CD4-positive, alpha-beta T cell (primary cell): ENCODE measurements at regions of chr20 and their contacts with region 1.

Region 1: DNA sequence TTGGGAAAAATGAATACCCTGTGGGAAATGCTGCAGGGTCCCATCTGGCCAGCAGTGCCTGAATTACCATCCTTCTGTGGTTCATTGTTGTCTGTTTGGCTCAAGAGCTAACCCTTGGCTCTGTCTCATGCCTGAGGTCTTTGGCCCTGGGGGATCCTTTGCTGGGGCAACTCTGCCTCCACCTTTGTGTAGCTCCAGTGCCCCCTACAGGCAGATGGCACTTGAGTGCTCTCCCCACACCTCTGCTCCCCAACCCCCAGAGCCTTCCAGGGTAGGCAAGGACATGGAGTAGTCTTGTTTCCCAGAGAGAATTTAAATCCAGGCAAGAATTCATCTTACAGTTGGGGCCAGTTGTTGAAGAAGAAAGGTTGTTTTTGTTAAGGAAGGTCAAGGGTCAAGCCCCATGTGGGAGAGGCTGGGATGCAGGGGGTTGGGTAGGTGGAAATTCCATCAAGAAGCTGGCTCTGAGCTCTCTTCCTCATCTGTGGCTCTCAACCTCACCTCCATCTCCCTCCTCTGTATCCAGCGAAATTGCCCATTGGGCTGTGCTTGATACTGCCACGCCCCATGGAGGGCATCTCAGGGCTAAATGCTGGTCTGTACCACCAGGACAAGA is 44.2 kb downstream of the ZNF831 start:
- DNase-seq: peak; percentile 73 to 90 (median 81)
- ATAC-seq: peak; percentile 96
- H3K4me3 ChIP-seq: no peak overlapping the region
- H3K4me3 Mint-ChIP-seq: no peak overlapping the region
- H3K27ac ChIP-seq: no peak overlapping the region
- H3K27ac Mint-ChIP-seq: peak overlapping the region; percentile 77
- H3K4me1 ChIP-seq: peaks cover 27% of the 10 kb centered on the region
- H3K4me1 Mint-ChIP-seq: peaks cover 51% of the 10 kb centered on the region
- H3K27me3 ChIP-seq: no peaks in the 10 kb centered on the region
- H3K27me3 Mint-ChIP-seq: no peaks in the 10 kb centered on the region
- CTCF ChIP-seq: peak; percentile 78

Region 2: GRCh38 chr20:58870239-58871014 is 337.4 kb before region 1 on chr20:
- CTCF ChIA-PET with region 1: interaction called, 3 read pairs
- POLR2A ChIA-PET with region 1: no interaction called
- intact Hi-C with region 1: loop called (anchors 1 to 5 kb)
- DNase-seq: peak in 12 of 14 experiments; percentile 38 to 75 (median 50)
- ATAC-seq: peak; percentile 67
- H3K4me3 ChIP-seq: no peak overlapping the region
- H3K4me3 Mint-ChIP-seq: no peak overlapping the region
- H3K27ac ChIP-seq: no peak overlapping the region
- H3K27ac Mint-ChIP-seq: no peak overlapping the region
- H3K4me1 ChIP-seq: peaks cover 3% of the 10 kb centered on the region
- H3K4me1 Mint-ChIP-seq: peaks cover 5% of the 10 kb centered on the region
- H3K27me3 ChIP-seq: no peaks in the 10 kb centered on the region
- H3K27me3 Mint-ChIP-seq: no peaks in the 10 kb centered on the region
- CTCF ChIP-seq: peak; percentile 86

Region 3: DNA sequence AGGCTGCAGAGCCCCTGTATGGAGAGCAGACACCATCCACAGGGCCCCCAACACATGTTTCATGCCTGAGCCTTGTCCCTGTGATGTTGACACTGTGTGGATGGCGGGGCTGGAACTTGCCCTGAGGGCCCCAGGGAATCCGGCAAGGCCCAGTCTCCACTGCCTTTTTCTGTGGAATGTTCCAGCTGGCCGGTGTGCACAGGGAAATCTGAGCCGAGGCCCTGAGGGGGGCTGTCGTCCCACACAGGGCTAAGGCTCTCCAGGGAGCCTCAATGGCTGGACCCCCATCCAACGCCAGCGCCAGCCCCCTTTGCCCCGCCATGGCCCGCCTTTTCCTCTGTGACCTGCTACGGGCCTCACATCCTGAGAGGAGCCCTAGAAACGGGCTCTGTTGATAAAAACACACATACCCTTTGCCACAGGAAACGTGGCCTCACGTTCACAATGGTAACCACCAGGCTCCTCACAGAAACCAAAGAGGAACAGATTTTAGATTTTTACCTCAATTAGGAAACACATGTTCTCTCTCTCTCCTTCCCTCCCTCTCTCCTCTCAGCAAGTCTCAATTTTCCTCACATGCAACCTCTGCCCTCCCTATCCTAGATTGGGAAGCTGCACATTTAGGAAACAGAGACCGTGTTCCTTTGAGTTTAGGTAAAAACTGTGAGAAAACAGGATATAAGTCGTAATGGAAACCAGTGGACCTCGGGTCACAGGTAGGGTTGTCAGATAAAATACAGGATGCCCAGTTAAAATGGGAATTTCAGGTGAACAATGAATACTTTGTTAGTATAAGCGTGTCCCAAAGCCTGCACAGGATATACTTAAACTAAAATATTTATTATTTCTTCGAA is 58.0 kb before region 1 on chr20:
- CTCF ChIA-PET with region 1: interaction called, 11 read pairs
- POLR2A ChIA-PET with region 1: interaction called, 13 read pairs
- intact Hi-C with region 1: loop called (anchors 5 kb)
- DNase-seq: peak; percentile 52 to 94 (median 72)
- ATAC-seq: peak; percentile 79
- H3K4me3 ChIP-seq: peak overlapping the region; percentile 21
- H3K4me3 Mint-ChIP-seq: peak overlapping the region; percentile 82
- H3K27ac ChIP-seq: peak overlapping the region; percentile 95 to 96
- H3K27ac Mint-ChIP-seq: peak overlapping the region; percentile 97
- H3K4me1 ChIP-seq: peaks cover 99% of the 10 kb centered on the region
- H3K4me1 Mint-ChIP-seq: peaks cover 95% of the 10 kb centered on the region
- H3K27me3 ChIP-seq: no peaks in the 10 kb centered on the region
- H3K27me3 Mint-ChIP-seq: no peaks in the 10 kb centered on the region
- CTCF ChIP-seq: no peak

Region 4: DNA sequence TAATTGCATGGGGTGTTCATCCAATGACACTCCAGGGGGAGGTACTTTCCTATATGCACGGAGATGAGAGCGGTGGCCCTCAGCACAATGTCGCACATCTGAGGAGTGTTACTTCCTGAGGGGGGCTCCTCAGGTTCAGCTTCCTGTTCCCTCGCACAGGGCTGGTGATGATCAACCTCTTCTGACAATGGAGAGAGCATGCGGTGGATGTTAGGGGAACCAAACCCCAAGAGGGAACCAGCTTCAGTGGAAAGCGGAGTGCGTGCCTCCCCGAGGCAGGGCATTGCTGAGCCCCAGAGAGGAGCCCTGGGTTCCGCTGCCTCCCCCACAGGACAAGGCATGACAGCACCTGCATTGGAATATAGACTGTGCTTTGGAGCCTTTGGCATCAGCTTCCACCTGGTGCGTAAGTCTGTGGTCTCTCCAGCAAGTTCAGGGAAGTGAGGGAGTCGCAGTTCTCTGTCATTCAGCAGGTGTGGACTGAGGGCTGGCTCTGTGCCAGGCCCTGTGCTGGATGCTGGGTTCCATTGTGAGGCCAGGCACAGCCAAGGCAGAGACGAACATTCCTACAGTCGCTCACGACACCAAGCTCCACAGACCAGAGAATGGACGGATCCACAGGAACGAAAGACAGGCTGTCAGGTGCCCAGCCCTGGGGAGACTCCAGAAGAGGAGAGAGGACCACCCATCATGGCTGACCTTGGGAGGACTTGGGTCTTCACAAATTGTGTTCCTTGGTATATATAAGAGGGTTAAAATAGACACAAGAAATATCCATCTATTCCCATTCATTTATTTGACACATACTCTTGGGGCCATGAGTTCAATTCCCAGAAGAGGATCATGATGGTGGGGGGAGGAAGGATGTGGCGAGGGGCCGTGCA is 48.1 kb before region 1 on chr20:
- CTCF ChIA-PET with region 1: interaction called, 7 read pairs
- POLR2A ChIA-PET with region 1: interaction called, 3 read pairs
- intact Hi-C with region 1: loop called (anchors 5 kb)
- DNase-seq: peak; percentile 47 to 93 (median 66)
- ATAC-seq: peak; percentile 81
- H3K4me3 ChIP-seq: peak overlapping the region; percentile 70
- H3K4me3 Mint-ChIP-seq: peak overlapping the region; percentile 89
- H3K27ac ChIP-seq: peak overlapping the region; percentile 94 to 95
- H3K27ac Mint-ChIP-seq: peak overlapping the region; percentile 95
- H3K4me1 ChIP-seq: peaks cover 68% of the 10 kb centered on the region
- H3K4me1 Mint-ChIP-seq: peaks cover 98% of the 10 kb centered on the region
- H3K27me3 ChIP-seq: no peaks in the 10 kb centered on the region
- H3K27me3 Mint-ChIP-seq: no peaks in the 10 kb centered on the region
- CTCF ChIP-seq: no peak

Region 5: GRCh38 chr20:59177261-59178250 is 30.3 kb before region 1 on chr20:
- CTCF ChIA-PET with region 1: interaction called, 4 read pairs
- POLR2A ChIA-PET with region 1: interaction called, 3 read pairs
- intact Hi-C with region 1: loop called in 1 of 2 experiments (anchors 5 kb)
- DNase-seq: peak in 4 of 14 experiments; percentile 43 to 82 (median 60)
- ATAC-seq: peak; percentile 68
- H3K4me3 ChIP-seq: peak overlapping the region; percentile 9
- H3K4me3 Mint-ChIP-seq: peak overlapping the region; percentile 35
- H3K27ac ChIP-seq: peak overlapping the region; percentile 33 to 70
- H3K27ac Mint-ChIP-seq: peak overlapping the region; percentile 82
- H3K4me1 ChIP-seq: peaks cover 73% of the 10 kb centered on the region
- H3K4me1 Mint-ChIP-seq: peaks cover 92% of the 10 kb centered on the region
- H3K27me3 ChIP-seq: no peaks in the 10 kb centered on the region
- H3K27me3 Mint-ChIP-seq: no peaks in the 10 kb centered on the region
- CTCF ChIP-seq: no peak

Region 6: GRCh38 chr20:59403261-59403961 is 195.6 kb after region 1 on chr20:
- CTCF ChIA-PET with region 1: interaction called, 3 read pairs
- POLR2A ChIA-PET with region 1: no interaction called
- intact Hi-C with region 1: loop called in 1 of 2 experiments (anchors 1 kb)
- DNase-seq: peak; percentile 52 to 83 (median 72)
- ATAC-seq: peak; percentile 71
- H3K4me3 ChIP-seq: peak overlapping the region; percentile 25
- H3K4me3 Mint-ChIP-seq: peak overlapping the region; percentile 76
- H3K27ac ChIP-seq: no peak overlapping the region
- H3K27ac Mint-ChIP-seq: no peak overlapping the region
- H3K4me1 ChIP-seq: peaks cover 21% of the 10 kb centered on the region
- H3K4me1 Mint-ChIP-seq: no peaks in the 10 kb centered on the region
- H3K27me3 ChIP-seq: peaks cover 27 to 41% of the 10 kb centered on the region in 2 experiments
- H3K27me3 Mint-ChIP-seq: no peaks in the 10 kb centered on the region
- CTCF ChIP-seq: peak; percentile 99